ENCODE measurements at regions of chr6 and their contacts with region 1.

Region 1: GRCh38 chr6:134795691-134796090 is 154.2 kb downstream of the ALDH8A1 start:
- DNase-seq: no peak
- ATAC-seq: no peak
- H3K4me3 ChIP-seq: no peak overlapping the region
- H3K27ac ChIP-seq: no peak overlapping the region
- H3K4me1 ChIP-seq: peaks cover 0 to 10% (median 0%) of the 10 kb centered on the region in 12 donors
- H3K27me3 ChIP-seq: no peaks in the 10 kb centered on the region
- CTCF ChIP-seq: no peak
- POLR2A ChIP-seq: no peak

Region 2: GRCh38 chr6:134686071-134686470 is 109.6 kb before region 1 on chr6:
- intact Hi-C with region 1: loop called in 1 of 10 experiments (anchors 5 kb)
- DNase-seq: no peak
- ATAC-seq: no peak
- H3K4me3 ChIP-seq: no peak overlapping the region
- H3K27ac ChIP-seq: peak overlapping the region in 3 of 12 donors; percentile 0 to 37 (median 11)
- H3K4me1 ChIP-seq: peaks cover 0 to 11% (median 5%) of the 10 kb centered on the region in 12 donors
- H3K27me3 ChIP-seq: no peaks in the 10 kb centered on the region
- CTCF ChIP-seq: no peak
- POLR2A ChIP-seq: no peak